ENCODE measurements at regions of chr17 and their contacts with region 1.

Region 1: GRCh38 chr17:58112970-58113631 is 29.9 kb downstream of the DYNLL2 start:
- DNase-seq: peak; percentile 88
- H3K4me3 ChIP-seq: no peak overlapping the region
- H3K27ac ChIP-seq: no peak overlapping the region
- H3K4me1 ChIP-seq: peaks cover 0 to 7% (median 2%) of the 10 kb centered on the region in 6 donors
- H3K27me3 ChIP-seq: peaks cover 0 to 38% (median 0%) of the 10 kb centered on the region in 7 donors
- CTCF ChIP-seq: peak; percentile 92 to 98 (median 96)
- POLR2A ChIP-seq: no peak

Region 2: GRCh38 chr17:57130761-57131461 is 982.2 kb before region 1 on chr17:
- intact Hi-C with region 1: loop called (anchors 5 kb)
- DNase-seq: peak; percentile 89
- H3K4me3 ChIP-seq: peak overlapping the region in 1 of 8 donors; percentile 44
- H3K27ac ChIP-seq: no peak overlapping the region
- H3K4me1 ChIP-seq: peaks cover 0 to 11% (median 2%) of the 10 kb centered on the region in 6 donors
- H3K27me3 ChIP-seq: peaks cover 0 to 1% (median 0%) of the 10 kb centered on the region in 7 donors
- CTCF ChIP-seq: peak; percentile 49 to 93 (median 85)
- POLR2A ChIP-seq: no peak

Region 3: DNA sequence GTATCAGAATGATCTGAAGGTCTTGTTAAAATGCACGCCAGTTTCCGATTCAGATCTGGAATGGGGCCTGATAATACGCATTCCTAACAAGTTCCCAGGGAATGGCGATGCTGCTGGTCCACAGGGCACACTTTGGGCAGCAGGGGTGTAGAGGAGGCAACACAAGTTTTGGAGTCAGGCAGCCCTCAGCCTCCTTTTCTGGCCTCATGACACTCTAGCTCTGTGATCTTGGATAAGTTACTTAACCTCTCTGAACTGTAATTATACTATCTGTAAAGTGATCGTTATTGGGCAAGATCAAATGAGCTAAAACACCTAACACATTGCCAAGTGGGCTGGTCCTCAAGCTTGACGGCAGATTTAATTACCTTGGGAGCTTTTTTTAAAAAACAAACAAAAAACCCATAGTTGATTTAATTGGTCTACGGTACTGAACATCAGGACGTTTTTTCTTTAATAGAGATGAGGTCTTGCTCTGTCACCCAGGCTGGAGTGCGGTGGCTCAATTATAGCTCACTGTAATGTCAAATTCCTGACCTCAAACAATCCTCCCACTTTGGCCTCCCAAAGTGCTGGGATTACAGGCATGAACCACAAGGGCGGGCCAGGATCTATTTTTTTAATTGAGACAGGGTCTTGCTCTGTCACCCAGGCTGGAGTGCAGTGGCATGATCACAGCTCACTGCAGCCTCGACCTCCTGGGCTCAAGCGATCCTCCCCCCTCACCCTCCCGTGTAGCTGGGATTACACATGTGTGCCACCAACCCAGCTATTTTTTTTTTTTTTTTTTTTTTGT is 253.3 kb before region 1 on chr17:
- intact Hi-C with region 1: loop called (anchors 2 kb)
- DNase-seq: no peak
- H3K4me3 ChIP-seq: no peak overlapping the region
- H3K27ac ChIP-seq: peak overlapping the region in 2 of 8 donors; percentile 74 to 85
- H3K4me1 ChIP-seq: peaks cover 12 to 51% (median 33%) of the 10 kb centered on the region in 6 donors
- H3K27me3 ChIP-seq: peaks cover 0 to 48% (median 8%) of the 10 kb centered on the region in 7 donors
- CTCF ChIP-seq: no peak
- POLR2A ChIP-seq: no peak

Region 4: GRCh38 chr17:57892146-57892828 is 220.8 kb before region 1 on chr17:
- intact Hi-C with region 1: loop called (anchors 10 kb)
- DNase-seq: peak; percentile 95
- H3K4me3 ChIP-seq: peak overlapping the region in 1 of 8 donors; percentile 44
- H3K27ac ChIP-seq: peak overlapping the region; percentile 53 to 92 (median 86)
- H3K4me1 ChIP-seq: peaks cover 7 to 76% (median 45%) of the 10 kb centered on the region in 6 donors
- H3K27me3 ChIP-seq: peaks cover 0 to 8% (median 0%) of the 10 kb centered on the region in 7 donors
- CTCF ChIP-seq: peak; percentile 92 to 99 (median 96)
- POLR2A ChIP-seq: no peak

Measured in spleen (tissue), 13 donors.